ENCODE measurements at regions of chr19 and their contacts with region 1.

Region 1: DNA sequence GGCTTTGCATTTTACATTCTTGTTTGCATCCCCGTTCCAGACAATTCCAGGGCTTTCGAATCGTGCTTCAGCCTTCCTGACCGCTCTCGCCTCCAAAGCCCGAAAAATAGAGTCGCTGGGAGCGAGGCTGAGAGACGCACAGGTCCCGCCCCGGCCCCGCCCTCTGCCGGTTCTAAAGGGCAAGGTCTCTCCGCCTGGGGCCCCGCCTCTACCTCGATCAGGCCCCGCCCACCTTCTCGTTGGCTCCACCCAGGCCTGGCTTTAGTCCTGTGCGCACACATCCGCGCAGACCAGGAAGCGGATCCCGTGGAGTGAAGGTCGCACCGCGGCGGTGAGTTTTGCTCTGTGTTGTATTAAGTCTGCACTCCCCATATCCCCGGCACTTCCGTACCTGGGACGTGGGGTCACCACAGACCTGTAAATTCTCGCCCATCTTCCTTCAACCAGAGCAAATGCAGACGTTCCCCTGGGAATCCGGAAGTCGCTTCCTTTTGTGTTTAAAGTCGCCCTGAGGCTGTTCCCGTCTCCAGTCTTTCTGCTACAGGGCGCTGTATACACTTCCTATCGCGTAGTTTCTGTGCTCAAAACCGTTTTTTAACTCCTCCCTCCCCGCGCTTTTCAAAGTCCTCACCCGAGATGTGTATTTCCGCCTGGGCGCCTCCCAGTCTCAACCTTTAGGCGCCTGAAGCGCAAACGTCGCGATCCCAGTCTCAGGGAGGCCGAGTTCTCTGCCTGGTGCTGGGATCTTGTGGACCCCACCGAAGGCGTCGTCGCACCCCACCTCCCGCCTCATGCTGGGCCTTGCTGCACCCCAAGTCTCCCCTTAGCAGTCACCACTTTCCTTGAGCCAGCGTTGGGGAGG is at the start of gene ZNF701:
- DNase-seq: peak; percentile 95
- H3K4me3 ChIP-seq: peak within 1 kb of the TSS; percentile 32 to 81 (median 64)
- H3K27ac ChIP-seq: peak within 1 kb of the TSS; percentile 75
- H3K4me1 ChIP-seq: no peaks in the 10 kb centered on the region
- H3K27me3 ChIP-seq: no peaks in the 10 kb centered on the region
- CTCF ChIP-seq: peak in 1 of 2 donors; percentile 18
- POLR2A ChIP-seq: peak; percentile 96
- total RNA-seq, gene ZNF701: 12.1 and 12.3 TPM in 2 replicates

Region 2: DNA sequence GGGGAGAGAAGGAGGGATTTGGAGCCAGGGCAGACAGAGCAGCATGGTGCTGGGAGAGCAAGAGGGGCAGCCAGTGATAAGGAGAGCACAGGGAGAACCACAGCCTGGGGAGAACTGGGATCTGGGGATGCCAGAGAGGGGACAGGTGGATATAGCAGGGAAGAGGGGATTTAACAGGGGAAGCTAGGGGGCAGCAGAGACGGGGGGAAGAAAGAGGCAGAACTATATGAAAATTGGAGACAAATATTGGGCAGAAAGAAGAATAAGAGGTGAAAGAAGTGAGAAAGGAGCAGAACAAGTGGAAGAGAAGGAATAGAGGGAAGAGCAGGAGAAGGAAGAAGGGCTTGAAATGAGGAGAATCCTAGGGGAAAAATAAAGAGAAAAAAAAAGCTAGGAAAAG is 179.1 kb before region 1 on chr19:
- CTCF ChIA-PET with region 1: no interaction called
- POLR2A ChIA-PET with region 1: no interaction called
- dilution Hi-C with region 1: no loop called
- intact Hi-C with region 1: no loop called
- DNase-seq: no peak
- H3K4me3 ChIP-seq: no peak overlapping the region
- H3K27ac ChIP-seq: no peak overlapping the region
- H3K4me1 ChIP-seq: no peaks in the 10 kb centered on the region
- H3K27me3 ChIP-seq: no peaks in the 10 kb centered on the region
- CTCF ChIP-seq: no peak
- POLR2A ChIP-seq: no peak

Region 3: DNA sequence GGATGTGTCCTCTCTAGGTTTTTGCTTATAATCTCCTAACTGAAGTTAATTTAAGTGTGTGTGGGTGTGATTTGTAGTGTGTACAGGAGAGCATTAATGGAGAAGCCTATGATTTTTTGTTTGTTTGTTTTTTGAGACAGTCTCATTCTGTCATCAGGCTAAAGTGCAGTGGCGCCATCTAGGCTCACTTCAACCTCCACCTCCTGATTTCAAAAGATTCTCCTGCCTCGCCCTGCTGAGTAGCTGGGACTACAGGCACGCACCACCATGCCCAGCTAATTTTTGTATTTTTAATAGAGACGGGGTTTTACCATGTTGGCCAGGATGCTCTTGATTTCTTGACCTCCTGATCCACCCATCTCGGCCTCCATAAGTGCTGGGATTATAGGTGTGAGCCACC is 20.5 kb after region 1 on chr19:
- CTCF ChIA-PET with region 1: no interaction called
- POLR2A ChIA-PET with region 1: no interaction called
- dilution Hi-C with region 1: no loop called
- intact Hi-C with region 1: no loop called
- DNase-seq: no peak
- H3K4me3 ChIP-seq: no peak overlapping the region
- H3K27ac ChIP-seq: no peak overlapping the region
- H3K4me1 ChIP-seq: no peaks in the 10 kb centered on the region
- H3K27me3 ChIP-seq: no peaks in the 10 kb centered on the region
- CTCF ChIP-seq: no peak
- POLR2A ChIP-seq: no peak

Region 4: GRCh38 chr19:52637718-52638585 is 67.7 kb after region 1 on chr19 and contains the start of gene ZNF83:
- CTCF ChIA-PET with region 1: no interaction called
- POLR2A ChIA-PET with region 1: no interaction called
- dilution Hi-C with region 1: no loop called
- intact Hi-C with region 1: loop called (anchors 1 kb)
- DNase-seq: peak; percentile 95
- H3K4me3 ChIP-seq: peak within 1 kb of the TSS; percentile 63 to 79 (median 72)
- H3K27ac ChIP-seq: peak within 1 kb of the TSS; percentile 56
- H3K4me1 ChIP-seq: peaks cover 10% of the 10 kb centered on the region
- H3K27me3 ChIP-seq: no peaks in the 10 kb centered on the region
- CTCF ChIP-seq: no peak
- POLR2A ChIP-seq: peak; percentile 94
- total RNA-seq, gene ZNF83: 39.3 and 41.4 TPM in 2 replicates

Measured in endothelial cell of umbilical vein (primary cell).